ENCODE measurements at regions of chr1 and their contacts with region 1.

Region 1: GRCh38 chr1:213015099-213016050 is at the start of gene ANGEL2:
- DNase-seq: peak; percentile 90 to 98
- H3K4me3 ChIP-seq: peak within 1 kb of the TSS; percentile 74 to 81
- H3K27ac ChIP-seq: peak within 1 kb of the TSS; percentile 88 to 91
- H3K4me1 ChIP-seq: peaks cover 5 to 12% of the 10 kb centered on the region in 2 donors
- H3K27me3 ChIP-seq: no peaks in the 10 kb centered on the region
- CTCF ChIP-seq: no peak
- total RNA-seq, gene ANGEL2: 36.7 TPM

Region 2: DNA sequence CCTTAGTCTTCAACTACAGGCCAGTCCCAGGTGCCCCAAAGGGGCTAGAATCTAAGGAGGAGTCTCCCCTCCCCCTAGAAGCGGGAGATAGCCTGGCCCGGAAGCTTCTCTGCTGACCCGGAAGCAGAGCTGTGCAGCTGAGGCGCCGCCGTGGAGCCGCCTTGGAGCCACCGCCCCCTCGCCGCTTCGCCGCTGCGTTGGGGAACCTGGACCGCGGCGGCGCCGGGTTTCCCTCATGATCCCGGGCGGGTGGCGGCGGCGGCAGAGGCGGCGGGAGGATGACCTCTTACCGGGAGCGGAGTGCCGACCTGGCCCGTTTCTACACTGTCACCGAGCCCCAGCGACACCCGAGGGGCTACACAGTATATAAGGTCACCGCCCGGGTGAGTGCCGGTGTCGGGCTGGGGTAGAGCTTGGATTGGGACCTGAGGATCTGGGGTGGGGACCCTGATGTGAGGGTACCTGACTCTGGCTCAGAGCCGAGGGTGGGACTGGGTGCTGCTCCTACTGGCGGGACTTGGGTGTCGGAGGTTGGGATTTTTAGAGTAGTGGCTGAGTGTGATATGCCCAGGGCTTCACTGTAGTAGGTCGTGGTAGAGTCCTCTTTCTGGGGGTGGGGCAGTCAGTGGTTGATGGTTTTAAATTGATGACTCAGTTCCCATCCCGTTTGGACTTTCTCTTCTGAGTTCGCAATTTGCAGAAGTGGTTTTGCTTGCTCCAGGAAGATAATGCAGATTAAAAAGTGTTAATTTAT is 35.9 kb after region 1 on chr1 and contains the start of gene RPS6KC1:
- intact Hi-C with region 1: loop called (anchors 1 kb)
- DNase-seq: peak; percentile 10 to 88
- H3K4me3 ChIP-seq: peak within 1 kb of the TSS; percentile 75 to 92
- H3K27ac ChIP-seq: peak within 1 kb of the TSS; percentile 67 to 77
- H3K4me1 ChIP-seq: peaks cover 6 to 11% of the 10 kb centered on the region in 2 donors
- H3K27me3 ChIP-seq: no peaks in the 10 kb centered on the region
- CTCF ChIP-seq: no peak
- total RNA-seq, gene RPS6KC1: 21.0 TPM